ENCODE measurements at regions of chr10 and their contacts with region 1.

Region 1: DNA sequence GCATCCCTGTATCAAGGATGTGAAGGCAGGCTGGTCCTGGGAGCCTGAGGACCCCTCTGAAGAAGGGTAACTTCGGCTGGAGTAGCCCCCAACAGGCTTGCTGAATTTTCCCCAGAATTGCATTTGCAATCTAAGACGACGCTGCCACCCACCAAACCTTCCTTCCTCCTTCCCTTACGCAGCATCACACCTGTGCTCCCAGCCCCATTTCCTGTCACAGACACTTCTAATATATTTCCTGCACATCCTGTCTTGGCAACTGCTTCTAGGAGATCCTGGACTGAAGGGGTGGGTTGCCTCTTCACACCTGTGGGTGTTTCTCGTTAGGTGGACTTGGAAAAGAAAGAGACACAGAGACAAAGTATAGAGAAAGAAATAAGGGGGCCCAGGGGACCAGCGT is 9.4 kb upstream of the PGAM1 start:
- DNase-seq: no peak
- H3K4me3 ChIP-seq: no peak overlapping the region
- H3K27me3 ChIP-seq: no peaks in the 10 kb centered on the region
- CTCF ChIP-seq: no peak

Region 2: DNA sequence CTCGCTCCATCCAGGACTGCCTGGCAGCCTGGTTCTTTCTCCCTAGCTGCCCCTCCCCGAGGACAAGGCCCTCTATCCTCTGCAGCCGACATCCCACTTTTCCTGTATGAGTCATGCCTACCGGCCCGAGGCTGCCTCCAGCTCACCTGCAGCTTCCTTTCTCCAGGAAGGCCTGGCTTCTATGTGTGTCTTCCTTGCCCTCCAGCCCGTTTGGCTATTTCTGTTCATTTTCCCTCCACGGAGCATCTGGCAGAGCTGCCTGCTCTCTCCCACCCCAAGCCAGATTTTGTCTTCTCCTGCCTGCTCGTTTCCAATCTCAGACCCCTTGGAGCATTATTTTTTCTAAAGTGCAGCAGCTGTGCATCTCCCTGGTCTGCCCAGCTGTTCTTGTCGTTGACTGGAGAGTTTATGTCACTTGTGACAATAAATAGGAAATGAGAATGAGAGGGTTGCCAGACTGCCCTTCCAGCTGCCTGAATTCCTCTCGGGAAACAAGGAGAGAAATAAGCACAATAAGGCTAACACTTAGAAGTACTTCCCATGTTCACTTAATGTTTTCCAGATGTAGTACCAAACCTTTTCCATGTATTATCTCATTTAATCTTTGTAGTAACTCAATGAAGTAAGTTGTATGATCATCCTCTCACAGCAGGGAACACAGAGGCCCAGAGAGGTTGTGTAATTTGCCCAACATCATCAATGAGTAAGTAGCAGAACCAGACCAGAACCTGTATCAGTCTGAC is 101.9 kb after region 1 on chr10:
- CTCF ChIA-PET with region 1: no interaction called
- POLR2A ChIA-PET with region 1: interaction called, 15 read pairs
- DNase-seq: no peak
- H3K4me3 ChIP-seq: no peak overlapping the region
- H3K27me3 ChIP-seq: no peaks in the 10 kb centered on the region
- CTCF ChIP-seq: no peak